ENCODE measurements at regions of chr12 and their contacts with region 1.

Region 1: GRCh38 chr12:111313833-111314259 is 55.0 kb downstream of the PHETA1 start:
- H3K4me3 Mint-ChIP-seq: peak overlapping the region; percentile 53
- H3K27ac Mint-ChIP-seq: no peak overlapping the region
- H3K4me1 Mint-ChIP-seq: peaks cover 41% of the 10 kb centered on the region
- H3K27me3 Mint-ChIP-seq: peaks cover 3% of the 10 kb centered on the region

Region 2: DNA sequence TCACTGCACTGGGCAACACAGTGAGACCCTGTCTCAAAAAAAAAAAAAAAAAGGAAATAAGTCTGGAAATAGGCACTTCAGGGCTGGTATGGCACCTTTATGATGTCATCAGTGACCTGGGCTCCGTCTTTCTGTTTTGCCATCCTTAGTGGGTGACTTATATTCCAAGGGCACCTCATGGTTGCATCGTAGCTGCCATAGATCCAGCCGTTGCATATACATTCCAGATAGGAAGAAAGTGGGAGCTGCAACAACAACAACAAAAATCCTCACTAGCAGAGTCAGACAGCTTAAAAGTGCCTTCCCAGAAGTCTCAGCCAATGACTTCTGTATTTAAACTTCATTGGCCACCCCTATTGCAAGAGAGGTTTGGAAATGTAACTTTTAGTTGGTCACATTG is 419.9 kb before region 1 on chr12:
- intact Hi-C with region 1: loop called (anchors 5 kb)
- H3K4me3 Mint-ChIP-seq: no peak overlapping the region
- H3K27ac Mint-ChIP-seq: no peak overlapping the region
- H3K4me1 Mint-ChIP-seq: peaks cover 13% of the 10 kb centered on the region
- H3K27me3 Mint-ChIP-seq: peaks cover 7% of the 10 kb centered on the region

Region 3: GRCh38 chr12:111024205-111024801 is 289.5 kb before region 1 on chr12:
- intact Hi-C with region 1: loop called (anchors 5 kb)
- H3K4me3 Mint-ChIP-seq: no peak overlapping the region
- H3K27ac Mint-ChIP-seq: no peak overlapping the region
- H3K4me1 Mint-ChIP-seq: peaks cover 4% of the 10 kb centered on the region
- H3K27me3 Mint-ChIP-seq: peaks cover 44% of the 10 kb centered on the region

Region 4: GRCh38 chr12:112096667-112097066 is 782.8 kb after region 1 on chr12:
- intact Hi-C with region 1: no loop called
- H3K4me3 Mint-ChIP-seq: peak overlapping the region; percentile 37
- H3K27ac Mint-ChIP-seq: peak overlapping the region; percentile 96
- H3K4me1 Mint-ChIP-seq: peaks cover 42% of the 10 kb centered on the region
- H3K27me3 Mint-ChIP-seq: no peaks in the 10 kb centered on the region